ENCODE measurements at regions of chr1 and their contacts with region 1.

Region 1: GRCh38 chr1:204363335-204364124 is 3.8 kb upstream of the PLEKHA6 start:
- DNase-seq: peak; percentile 52 to 90 (median 71)
- ATAC-seq: peak; percentile 99
- H3K4me3 ChIP-seq: peak overlapping the region; percentile 45 to 52
- H3K4me3 Mint-ChIP-seq: peak overlapping the region; percentile 77
- H3K27ac ChIP-seq: peak overlapping the region in 1 of 2 experiments; percentile 24
- H3K27ac Mint-ChIP-seq: no peak overlapping the region
- H3K4me1 ChIP-seq: peaks cover 10% of the 10 kb centered on the region
- H3K4me1 Mint-ChIP-seq: peaks cover 5% of the 10 kb centered on the region
- H3K27me3 ChIP-seq: no peaks in the 10 kb centered on the region
- H3K27me3 Mint-ChIP-seq: peaks cover 4% of the 10 kb centered on the region
- CTCF ChIP-seq: peak; percentile 74

Region 2: GRCh38 chr1:202405928-202406327 is 1957.6 kb before region 1 on chr1:
- CTCF ChIA-PET with region 1: no interaction called
- POLR2A ChIA-PET with region 1: no interaction called
- intact Hi-C with region 1: no loop called
- DNase-seq: no peak
- ATAC-seq: no peak
- H3K4me3 ChIP-seq: no peak overlapping the region
- H3K4me3 Mint-ChIP-seq: no peak overlapping the region
- H3K27ac ChIP-seq: no peak overlapping the region
- H3K27ac Mint-ChIP-seq: no peak overlapping the region
- H3K4me1 ChIP-seq: no peaks in the 10 kb centered on the region
- H3K4me1 Mint-ChIP-seq: peaks cover 4% of the 10 kb centered on the region
- H3K27me3 ChIP-seq: no peaks in the 10 kb centered on the region
- H3K27me3 Mint-ChIP-seq: no peaks in the 10 kb centered on the region
- CTCF ChIP-seq: no peak

Region 3: DNA sequence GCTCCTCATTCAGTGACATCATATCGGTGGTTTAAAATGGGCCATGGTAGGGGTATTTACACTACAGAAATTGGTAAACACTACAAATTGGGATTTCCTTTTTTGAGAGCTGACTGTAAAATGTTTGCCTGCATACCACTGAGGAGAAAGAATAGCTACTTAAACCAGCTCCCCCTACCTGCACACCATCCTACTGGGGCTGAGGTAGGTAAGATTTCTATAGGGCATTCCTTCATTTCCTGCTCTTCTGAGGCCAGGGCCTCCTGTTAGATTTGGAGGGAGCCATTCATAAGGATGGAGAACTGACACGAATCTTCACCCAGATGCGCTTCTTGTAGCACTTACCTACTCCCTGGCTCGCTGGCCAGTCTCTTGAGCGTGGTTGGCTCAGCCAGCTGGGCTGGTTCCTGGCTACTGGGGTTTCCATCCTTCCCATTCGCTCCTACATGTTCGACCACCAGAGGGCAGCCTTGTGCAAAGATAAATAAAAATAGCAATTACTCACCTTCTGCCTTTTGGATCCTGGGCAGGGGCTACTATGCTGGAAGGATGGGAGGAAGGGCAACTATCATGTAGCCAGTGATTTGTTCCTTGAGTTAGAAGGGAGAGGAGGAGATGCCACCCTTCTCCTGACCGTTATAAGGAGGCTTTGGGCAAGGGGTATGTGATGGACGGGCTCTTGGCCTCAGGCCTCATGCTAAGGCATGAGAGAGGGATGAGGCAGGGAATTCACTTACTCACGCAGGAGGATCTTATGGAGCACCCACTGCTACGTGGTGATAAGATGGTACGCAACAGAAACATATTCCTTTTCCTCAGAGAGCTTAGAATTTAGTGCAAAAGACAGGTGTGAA is 858.9 kb before region 1 on chr1:
- CTCF ChIA-PET with region 1: no interaction called
- POLR2A ChIA-PET with region 1: no interaction called
- intact Hi-C with region 1: loop called in 1 of 2 experiments (anchors 10 kb)
- DNase-seq: peak; percentile 34 to 86 (median 77)
- ATAC-seq: peak; percentile 66
- H3K4me3 ChIP-seq: no peak overlapping the region
- H3K4me3 Mint-ChIP-seq: no peak overlapping the region
- H3K27ac ChIP-seq: no peak overlapping the region
- H3K27ac Mint-ChIP-seq: no peak overlapping the region
- H3K4me1 ChIP-seq: no peaks in the 10 kb centered on the region
- H3K4me1 Mint-ChIP-seq: peaks cover 2% of the 10 kb centered on the region
- H3K27me3 ChIP-seq: peaks cover 0 to 6% of the 10 kb centered on the region in 2 experiments
- H3K27me3 Mint-ChIP-seq: peaks cover 3% of the 10 kb centered on the region
- CTCF ChIP-seq: peak; percentile 88

Region 4: GRCh38 chr1:204213668-204214662 is 149.6 kb before region 1 on chr1 and contains the start of gene GOLT1A:
- CTCF ChIA-PET with region 1: interaction called, 11 read pairs
- POLR2A ChIA-PET with region 1: no interaction called
- intact Hi-C with region 1: loop called in 1 of 2 experiments (anchors 5 kb)
- DNase-seq: peak in 8 of 9 experiments; percentile 25 to 69 (median 42)
- ATAC-seq: peak; percentile 94
- H3K4me3 ChIP-seq: peak within 1 kb of the TSS; percentile 31 to 53
- H3K4me3 Mint-ChIP-seq: peak within 1 kb of the TSS; percentile 69
- H3K27ac ChIP-seq: no peak within 1 kb of the TSS
- H3K27ac Mint-ChIP-seq: no peak within 1 kb of the TSS
- H3K4me1 ChIP-seq: peaks cover 18% of the 10 kb centered on the region
- H3K4me1 Mint-ChIP-seq: peaks cover 13% of the 10 kb centered on the region
- H3K27me3 ChIP-seq: no peaks in the 10 kb centered on the region
- H3K27me3 Mint-ChIP-seq: peaks cover 7% of the 10 kb centered on the region
- CTCF ChIP-seq: peak; percentile 13
- total RNA-seq, gene GOLT1A: not detected

Region 5: GRCh38 chr1:204294371-204294770 is 69.2 kb before region 1 on chr1:
- CTCF ChIA-PET with region 1: no interaction called
- POLR2A ChIA-PET with region 1: no interaction called
- intact Hi-C with region 1: no loop called
- DNase-seq: no peak
- ATAC-seq: no peak
- H3K4me3 ChIP-seq: no peak overlapping the region
- H3K4me3 Mint-ChIP-seq: no peak overlapping the region
- H3K27ac ChIP-seq: no peak overlapping the region
- H3K27ac Mint-ChIP-seq: no peak overlapping the region
- H3K4me1 ChIP-seq: peaks cover 10% of the 10 kb centered on the region
- H3K4me1 Mint-ChIP-seq: peaks cover 17% of the 10 kb centered on the region
- H3K27me3 ChIP-seq: no peaks in the 10 kb centered on the region
- H3K27me3 Mint-ChIP-seq: peaks cover 11% of the 10 kb centered on the region
- CTCF ChIP-seq: no peak

Region 6: DNA sequence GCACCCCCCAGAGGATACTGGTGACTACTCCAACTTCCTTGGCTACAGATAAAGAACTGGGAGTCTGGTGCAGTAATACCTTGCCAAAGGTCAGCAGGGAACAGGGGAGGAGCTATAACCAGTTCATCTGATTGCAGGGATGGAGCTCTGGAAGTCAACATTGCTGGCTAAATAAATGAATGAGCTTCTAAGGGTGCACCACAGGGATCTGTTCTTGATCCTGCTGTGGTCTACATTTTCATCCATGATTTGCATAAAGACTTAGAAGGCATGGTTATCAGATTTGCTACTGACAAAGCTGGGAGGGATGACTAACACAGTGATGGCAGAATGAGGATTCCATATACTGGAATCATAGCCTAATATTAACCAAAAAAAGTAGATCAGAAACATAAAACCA is 22.1 kb before region 1 on chr1:
- CTCF ChIA-PET with region 1: interaction called, 11 read pairs
- POLR2A ChIA-PET with region 1: no interaction called
- intact Hi-C with region 1: no loop called
- DNase-seq: no peak
- ATAC-seq: no peak
- H3K4me3 ChIP-seq: no peak overlapping the region
- H3K4me3 Mint-ChIP-seq: no peak overlapping the region
- H3K27ac ChIP-seq: no peak overlapping the region
- H3K27ac Mint-ChIP-seq: no peak overlapping the region
- H3K4me1 ChIP-seq: no peaks in the 10 kb centered on the region
- H3K4me1 Mint-ChIP-seq: no peaks in the 10 kb centered on the region
- H3K27me3 ChIP-seq: no peaks in the 10 kb centered on the region
- H3K27me3 Mint-ChIP-seq: no peaks in the 10 kb centered on the region
- CTCF ChIP-seq: no peak

Region 7: DNA sequence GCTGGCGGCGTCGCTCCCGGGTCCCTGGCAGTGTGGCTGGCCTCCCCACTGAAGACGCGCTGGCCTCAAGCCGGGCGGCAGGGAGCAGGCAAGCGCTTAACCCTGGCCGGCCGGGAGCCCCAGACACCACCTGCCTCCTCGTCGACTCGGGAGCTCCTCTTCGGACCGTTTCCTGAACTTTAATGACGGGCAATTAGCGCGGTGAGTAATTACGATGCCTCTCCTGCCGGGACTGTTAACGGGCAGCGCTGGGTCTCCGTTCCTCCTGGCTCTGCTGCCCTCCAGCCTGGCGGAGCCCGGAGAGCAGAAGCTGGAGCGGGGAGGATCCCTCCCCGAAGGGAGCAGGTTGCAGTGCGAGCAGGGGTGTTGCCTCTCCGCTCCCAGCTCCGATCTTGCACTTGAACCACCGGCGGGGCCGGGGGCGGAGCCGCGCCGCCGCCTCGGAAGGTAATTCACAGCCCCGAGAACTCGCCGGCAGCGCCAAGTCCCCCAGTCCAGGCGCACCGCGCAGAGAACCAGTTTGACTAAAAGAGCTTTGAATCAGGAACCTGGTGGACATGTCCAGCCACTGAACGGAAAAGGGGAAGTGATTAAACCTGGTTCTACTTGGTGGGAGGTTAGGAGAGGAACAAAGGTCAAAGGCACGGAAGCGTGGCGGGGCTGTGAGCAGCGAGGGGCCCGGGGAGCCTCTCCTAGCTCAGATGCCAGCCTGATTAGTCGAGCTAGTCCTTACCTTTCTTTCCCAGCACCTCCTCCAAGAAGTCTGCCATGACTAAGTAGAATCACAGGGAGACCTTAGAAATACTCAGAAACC is 14.5 kb after region 1 on chr1:
- CTCF ChIA-PET with region 1: interaction called, 64 read pairs
- POLR2A ChIA-PET with region 1: no interaction called
- intact Hi-C with region 1: no loop called
- DNase-seq: peak in 8 of 9 experiments; percentile 35 to 76 (median 54)
- ATAC-seq: peak; percentile 60
- H3K4me3 ChIP-seq: peak overlapping the region; percentile 54 to 70
- H3K4me3 Mint-ChIP-seq: peak overlapping the region; percentile 91
- H3K27ac ChIP-seq: no peak overlapping the region
- H3K27ac Mint-ChIP-seq: no peak overlapping the region
- H3K4me1 ChIP-seq: peaks cover 13% of the 10 kb centered on the region
- H3K4me1 Mint-ChIP-seq: peaks cover 13% of the 10 kb centered on the region
- H3K27me3 ChIP-seq: peaks cover 5 to 14% of the 10 kb centered on the region in 2 experiments
- H3K27me3 Mint-ChIP-seq: peaks cover 11% of the 10 kb centered on the region
- CTCF ChIP-seq: no peak

Region 8: DNA sequence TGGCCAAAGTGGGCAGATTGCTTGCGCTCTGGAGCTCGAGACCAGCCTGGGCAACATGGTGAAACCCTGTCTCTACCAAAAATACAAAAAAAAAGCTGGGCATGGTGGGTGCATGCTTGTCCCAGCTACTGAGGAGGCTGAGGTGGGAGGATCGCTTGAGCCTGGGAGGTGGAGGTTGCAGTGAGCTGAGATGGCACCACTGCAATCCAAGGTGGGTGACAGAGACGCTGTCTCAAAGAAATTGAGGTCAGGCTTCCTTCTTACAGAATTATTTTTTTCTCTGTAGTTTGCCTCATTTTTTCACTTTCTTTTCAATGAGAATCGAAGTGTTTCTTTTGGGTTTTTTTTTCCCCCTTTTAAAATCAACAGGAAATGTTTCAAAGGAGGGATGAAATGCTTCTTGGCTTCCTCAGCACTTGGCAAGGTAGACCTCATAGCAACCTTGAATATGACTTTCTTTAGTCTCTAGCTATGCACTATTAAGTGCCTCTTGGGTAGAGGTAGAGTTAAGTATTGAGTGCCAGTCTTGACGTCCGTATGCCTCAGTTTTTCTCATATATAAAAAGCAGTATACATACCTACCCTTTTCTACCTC is 193.0 kb after region 1 on chr1:
- CTCF ChIA-PET with region 1: no interaction called
- POLR2A ChIA-PET with region 1: no interaction called
- intact Hi-C with region 1: no loop called
- DNase-seq: peak in 2 of 9 experiments; percentile 8 to 53
- ATAC-seq: peak; percentile 72
- H3K4me3 ChIP-seq: no peak overlapping the region
- H3K4me3 Mint-ChIP-seq: peak overlapping the region; percentile 20
- H3K27ac ChIP-seq: peak overlapping the region in 1 of 2 experiments; percentile 28
- H3K27ac Mint-ChIP-seq: peak overlapping the region; percentile 84
- H3K4me1 ChIP-seq: peaks cover 18% of the 10 kb centered on the region
- H3K4me1 Mint-ChIP-seq: peaks cover 45% of the 10 kb centered on the region
- H3K27me3 ChIP-seq: no peaks in the 10 kb centered on the region
- H3K27me3 Mint-ChIP-seq: no peaks in the 10 kb centered on the region
- CTCF ChIP-seq: no peak

Measured in CD8-positive, alpha-beta T cell (primary cell).